Mammary epithelial cell (primary cell): ENCODE measurements at regions of chr3 and their contacts with region 1.

Region 1: GRCh38 chr3:97821810-97822775 is at the start of gene CRYBG3:
- DNase-seq: peak; percentile 84
- H3K4me3 ChIP-seq: peak within 1 kb of the TSS; percentile 64 to 85 (median 72)
- H3K27ac ChIP-seq: peak within 1 kb of the TSS; percentile 67
- H3K4me1 ChIP-seq: peaks cover 10% of the 10 kb centered on the region
- H3K27me3 ChIP-seq: no peaks in the 10 kb centered on the region
- CTCF ChIP-seq: peak in 1 of 2 donors; percentile 39
- total RNA-seq, gene CRYBG3: 12.6 to 14.0 TPM

Region 2: GRCh38 chr3:97810779-97811390 is 11.2 kb before region 1 on chr3:
- CTCF ChIA-PET with region 1: interaction called, 7 read pairs
- dilution Hi-C with region 1: no loop called
- in situ Hi-C with region 1: no loop called
- intact Hi-C with region 1: loop called (anchors 1 kb)
- DNase-seq: peak; percentile 49
- H3K4me3 ChIP-seq: no peak overlapping the region
- H3K27ac ChIP-seq: no peak overlapping the region
- H3K4me1 ChIP-seq: peaks cover 17% of the 10 kb centered on the region
- H3K27me3 ChIP-seq: no peaks in the 10 kb centered on the region
- CTCF ChIP-seq: no peak

Region 3: GRCh38 chr3:97871801-97872524 is 49.9 kb after region 1 on chr3:
- CTCF ChIA-PET with region 1: no interaction called
- dilution Hi-C with region 1: no loop called
- in situ Hi-C with region 1: no loop called
- intact Hi-C with region 1: loop called (anchors 1 kb)
- DNase-seq: peak; percentile 96
- H3K4me3 ChIP-seq: peak overlapping the region in 1 of 3 experiments; percentile 16
- H3K27ac ChIP-seq: peak overlapping the region; percentile 87
- H3K4me1 ChIP-seq: peaks cover 25% of the 10 kb centered on the region
- H3K27me3 ChIP-seq: no peaks in the 10 kb centered on the region
- CTCF ChIP-seq: no peak

Region 4: DNA sequence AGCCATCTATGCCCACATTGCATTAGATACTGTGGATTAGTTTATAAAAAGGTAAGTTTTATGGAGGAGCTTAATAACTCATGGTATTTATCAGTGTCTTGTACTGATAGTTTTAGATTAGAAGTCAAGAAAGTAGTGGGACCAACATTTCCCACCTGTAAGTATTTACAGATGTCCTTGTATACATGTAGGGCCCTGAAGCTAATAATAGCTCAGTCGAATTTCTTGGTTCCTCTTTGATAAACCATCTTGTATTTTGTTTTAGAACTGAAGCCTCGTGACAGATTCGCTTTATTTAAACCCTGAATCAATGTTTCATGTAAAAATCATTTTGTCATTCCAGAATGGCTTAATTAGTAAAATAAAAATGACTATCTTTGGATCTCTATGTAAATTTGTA is 73.1 kb after region 1 on chr3:
- CTCF ChIA-PET with region 1: no interaction called
- dilution Hi-C with region 1: no loop called
- in situ Hi-C with region 1: no loop called
- intact Hi-C with region 1: loop called (anchors 5 kb)
- DNase-seq: no peak
- H3K4me3 ChIP-seq: no peak overlapping the region
- H3K27ac ChIP-seq: no peak overlapping the region
- H3K4me1 ChIP-seq: no peaks in the 10 kb centered on the region
- H3K27me3 ChIP-seq: no peaks in the 10 kb centered on the region
- CTCF ChIP-seq: no peak

Region 5: DNA sequence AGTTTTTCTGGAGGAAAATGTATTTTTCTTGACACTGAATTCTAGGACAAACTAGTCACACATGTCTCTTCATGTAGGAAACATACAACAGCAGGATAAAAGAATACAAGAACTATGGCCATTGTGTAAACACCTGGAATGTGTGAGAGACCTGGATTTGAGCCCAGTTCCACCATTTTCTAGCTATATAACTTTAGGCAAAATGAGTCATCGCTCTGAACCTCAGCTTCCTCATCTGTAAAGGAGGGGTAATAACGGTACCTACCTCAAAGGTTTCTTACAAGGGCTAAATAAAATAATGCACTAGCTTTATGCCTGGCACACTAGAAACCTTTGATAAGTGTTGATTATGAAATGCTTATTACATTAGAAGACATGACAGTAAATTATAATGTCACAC is 92.3 kb after region 1 on chr3:
- CTCF ChIA-PET with region 1: interaction called, 3 read pairs
- dilution Hi-C with region 1: no loop called
- in situ Hi-C with region 1: no loop called
- intact Hi-C with region 1: loop called (anchors 1 kb)
- DNase-seq: peak; percentile 82
- H3K4me3 ChIP-seq: no peak overlapping the region
- H3K27ac ChIP-seq: peak overlapping the region; percentile 35
- H3K4me1 ChIP-seq: peaks cover 23% of the 10 kb centered on the region
- H3K27me3 ChIP-seq: no peaks in the 10 kb centered on the region
- CTCF ChIP-seq: no peak

Region 6: GRCh38 chr3:97927654-97928053 is 105.6 kb after region 1 on chr3:
- CTCF ChIA-PET with region 1: no interaction called
- dilution Hi-C with region 1: no loop called
- in situ Hi-C with region 1: no loop called
- intact Hi-C with region 1: no loop called
- DNase-seq: no peak
- H3K4me3 ChIP-seq: no peak overlapping the region
- H3K27ac ChIP-seq: no peak overlapping the region
- H3K4me1 ChIP-seq: no peaks in the 10 kb centered on the region
- H3K27me3 ChIP-seq: no peaks in the 10 kb centered on the region
- CTCF ChIP-seq: no peak

Region 7: DNA sequence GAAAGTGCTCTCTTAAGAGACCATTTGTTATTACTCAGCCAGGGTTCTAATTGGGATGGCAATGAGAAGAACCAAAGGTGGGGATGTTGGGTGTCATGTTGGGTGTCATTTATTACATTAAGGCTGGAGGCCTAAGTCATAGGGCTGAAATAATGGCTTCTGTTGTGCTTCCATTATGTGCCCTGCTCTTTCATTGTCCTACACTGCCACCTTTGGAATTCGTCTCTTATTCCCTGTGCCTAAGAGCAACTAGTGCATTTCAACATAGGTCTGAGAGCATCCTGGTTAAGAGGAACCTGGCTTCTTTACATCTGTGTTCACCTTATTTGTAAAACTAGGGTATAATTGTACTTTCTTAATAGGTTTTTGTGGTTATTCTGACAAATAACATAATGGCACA is 117.9 kb after region 1 on chr3:
- CTCF ChIA-PET with region 1: no interaction called
- dilution Hi-C with region 1: no loop called
- in situ Hi-C with region 1: no loop called
- intact Hi-C with region 1: loop called (anchors 5 kb)
- DNase-seq: no peak
- H3K4me3 ChIP-seq: no peak overlapping the region
- H3K27ac ChIP-seq: no peak overlapping the region
- H3K4me1 ChIP-seq: no peaks in the 10 kb centered on the region
- H3K27me3 ChIP-seq: no peaks in the 10 kb centered on the region
- CTCF ChIP-seq: no peak

Region 8: GRCh38 chr3:97971677-97972567 is 149.8 kb after region 1 on chr3 and contains the start of gene RIOX2:
- CTCF ChIA-PET with region 1: no interaction called
- dilution Hi-C with region 1: no loop called
- in situ Hi-C with region 1: no loop called
- intact Hi-C with region 1: loop called (anchors 5 kb)
- DNase-seq: peak; percentile 74
- H3K4me3 ChIP-seq: peak within 1 kb of the TSS; percentile 51 to 71 (median 67)
- H3K27ac ChIP-seq: peak within 1 kb of the TSS; percentile 46
- H3K4me1 ChIP-seq: peaks cover 10% of the 10 kb centered on the region
- H3K27me3 ChIP-seq: no peaks in the 10 kb centered on the region
- CTCF ChIP-seq: no peak
- total RNA-seq, gene RIOX2: 33.3 to 42.4 TPM

Region 9: DNA sequence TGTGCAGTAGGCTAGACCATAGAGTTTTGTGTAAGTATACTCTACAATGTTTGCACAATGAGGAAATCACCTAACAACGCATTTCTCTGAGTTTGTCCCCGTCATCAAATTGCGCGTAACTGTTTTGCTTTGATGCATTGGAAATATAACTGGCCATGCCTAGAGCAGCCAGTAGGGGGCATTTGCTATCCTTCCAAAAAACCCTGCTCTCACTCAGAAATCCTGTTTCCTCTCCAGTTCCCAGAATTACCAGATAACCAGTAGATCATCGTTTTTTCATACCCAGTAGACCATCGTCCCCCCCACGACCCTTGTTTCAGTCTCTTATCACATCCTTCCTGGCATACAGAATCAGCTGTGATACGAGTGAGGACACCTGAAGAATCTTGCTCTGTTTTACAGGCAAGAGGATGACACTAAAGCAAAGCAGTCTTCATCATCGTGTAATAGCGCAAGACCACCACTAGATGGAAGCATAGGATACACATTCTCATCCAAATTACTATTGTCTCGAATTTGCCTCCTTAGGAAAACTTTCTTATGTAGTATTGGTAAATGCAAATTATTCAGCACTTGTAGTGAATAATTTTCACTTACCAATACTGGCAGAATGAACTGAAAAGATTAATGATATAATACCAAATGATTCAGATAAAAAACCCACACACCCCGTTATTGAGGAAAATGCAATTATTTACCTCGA is 217.4 kb after region 1 on chr3:
- CTCF ChIA-PET with region 1: no interaction called
- dilution Hi-C with region 1: no loop called
- in situ Hi-C with region 1: no loop called
- intact Hi-C with region 1: no loop called
- DNase-seq: peak; percentile 80
- H3K4me3 ChIP-seq: peak overlapping the region; percentile 47 to 52 (median 50)
- H3K27ac ChIP-seq: no peak overlapping the region
- H3K4me1 ChIP-seq: peaks cover 6% of the 10 kb centered on the region
- H3K27me3 ChIP-seq: no peaks in the 10 kb centered on the region
- CTCF ChIP-seq: peak; percentile 74 to 82

Region 10: DNA sequence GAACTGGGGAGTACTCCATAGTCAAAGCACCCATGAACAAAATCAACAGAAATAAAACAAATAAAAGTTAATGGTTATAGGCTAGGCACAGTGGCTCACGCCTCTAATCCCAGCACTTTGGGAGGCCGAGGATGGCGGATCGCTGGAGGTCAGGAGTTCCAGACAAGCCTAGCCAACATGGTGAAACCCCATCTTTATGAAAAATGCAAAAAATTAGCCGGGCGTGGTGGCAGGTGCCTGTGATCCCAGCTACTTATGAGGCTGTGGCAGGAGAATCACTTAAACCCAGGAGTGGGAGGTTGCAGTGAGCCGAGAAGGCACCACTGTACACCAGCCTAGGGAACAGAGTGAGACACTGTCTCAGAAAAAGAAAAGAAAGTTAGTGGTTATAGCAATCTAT is 331.1 kb after region 1 on chr3:
- CTCF ChIA-PET with region 1: no interaction called
- dilution Hi-C with region 1: no loop called
- in situ Hi-C with region 1: no loop called
- intact Hi-C with region 1: no loop called
- DNase-seq: no peak
- H3K4me3 ChIP-seq: no peak overlapping the region
- H3K27ac ChIP-seq: no peak overlapping the region
- H3K4me1 ChIP-seq: no peaks in the 10 kb centered on the region
- H3K27me3 ChIP-seq: no peaks in the 10 kb centered on the region
- CTCF ChIP-seq: no peak